CD4-positive, alpha-beta T cell (primary cell): ENCODE measurements at regions of chr5 and their contacts with region 1.

Region 1: GRCh38 chr5:154189819-154190594 is 526 bp upstream of the GALNT10 start:
- DNase-seq: peak; percentile 65 to 92 (median 75)
- ATAC-seq: peak; percentile 75
- H3K4me3 ChIP-seq: peak overlapping the region; percentile 95
- H3K4me3 Mint-ChIP-seq: peak overlapping the region; percentile 94
- H3K27ac ChIP-seq: peak overlapping the region; percentile 42 to 66
- H3K27ac Mint-ChIP-seq: peak overlapping the region; percentile 81
- H3K4me1 ChIP-seq: peaks cover 35% of the 10 kb centered on the region
- H3K4me1 Mint-ChIP-seq: peaks cover 38% of the 10 kb centered on the region
- H3K27me3 ChIP-seq: no peaks in the 10 kb centered on the region
- H3K27me3 Mint-ChIP-seq: no peaks in the 10 kb centered on the region
- CTCF ChIP-seq: peak; percentile 65

Region 2: DNA sequence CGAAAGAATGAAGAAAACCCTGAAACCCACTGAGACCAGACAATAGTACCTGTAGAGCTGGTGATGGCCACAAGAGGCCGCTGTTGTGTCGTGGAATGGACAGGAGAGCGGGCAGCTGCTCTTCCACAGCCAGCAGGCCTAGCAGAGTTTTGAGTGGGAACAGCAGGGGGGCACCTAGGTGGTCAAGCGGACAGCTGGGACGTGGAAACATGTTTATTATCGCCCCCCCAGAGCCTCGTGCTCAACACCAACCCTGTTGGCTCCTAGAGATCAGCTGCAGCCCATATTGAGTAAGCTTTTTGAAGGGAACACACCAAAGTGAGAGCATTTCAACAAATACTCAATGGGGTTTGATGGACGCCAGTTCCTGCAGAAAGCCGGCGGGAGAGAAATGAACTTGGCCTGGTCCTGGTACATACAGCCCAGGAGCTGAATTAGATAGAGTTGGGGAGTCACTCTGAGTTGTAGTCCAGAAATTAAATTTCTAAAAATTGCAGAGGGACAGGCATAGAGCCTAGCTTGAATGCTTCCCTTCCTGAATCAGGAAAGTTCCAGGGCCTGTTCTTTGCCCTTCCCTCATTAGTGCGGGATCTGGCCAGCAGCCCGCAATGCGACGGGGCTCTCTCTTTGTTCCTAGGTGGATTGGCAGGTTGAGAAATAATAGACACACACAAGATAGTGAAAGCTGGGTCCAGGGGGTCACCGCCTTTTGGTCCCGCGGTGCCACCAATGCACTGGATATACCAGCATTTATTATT is 117.4 kb before region 1 on chr5:
- CTCF ChIA-PET with region 1: interaction called, 9 read pairs
- POLR2A ChIA-PET with region 1: interaction called, 15 read pairs
- intact Hi-C with region 1: loop called in 1 of 2 experiments (anchors 5 kb)
- DNase-seq: peak; percentile 68 to 89 (median 81)
- ATAC-seq: peak; percentile 81
- H3K4me3 ChIP-seq: no peak overlapping the region
- H3K4me3 Mint-ChIP-seq: no peak overlapping the region
- H3K27ac ChIP-seq: no peak overlapping the region
- H3K27ac Mint-ChIP-seq: no peak overlapping the region
- H3K4me1 ChIP-seq: peaks cover 22% of the 10 kb centered on the region
- H3K4me1 Mint-ChIP-seq: peaks cover 17% of the 10 kb centered on the region
- H3K27me3 ChIP-seq: no peaks in the 10 kb centered on the region
- H3K27me3 Mint-ChIP-seq: no peaks in the 10 kb centered on the region
- CTCF ChIP-seq: peak; percentile 96

Region 3: DNA sequence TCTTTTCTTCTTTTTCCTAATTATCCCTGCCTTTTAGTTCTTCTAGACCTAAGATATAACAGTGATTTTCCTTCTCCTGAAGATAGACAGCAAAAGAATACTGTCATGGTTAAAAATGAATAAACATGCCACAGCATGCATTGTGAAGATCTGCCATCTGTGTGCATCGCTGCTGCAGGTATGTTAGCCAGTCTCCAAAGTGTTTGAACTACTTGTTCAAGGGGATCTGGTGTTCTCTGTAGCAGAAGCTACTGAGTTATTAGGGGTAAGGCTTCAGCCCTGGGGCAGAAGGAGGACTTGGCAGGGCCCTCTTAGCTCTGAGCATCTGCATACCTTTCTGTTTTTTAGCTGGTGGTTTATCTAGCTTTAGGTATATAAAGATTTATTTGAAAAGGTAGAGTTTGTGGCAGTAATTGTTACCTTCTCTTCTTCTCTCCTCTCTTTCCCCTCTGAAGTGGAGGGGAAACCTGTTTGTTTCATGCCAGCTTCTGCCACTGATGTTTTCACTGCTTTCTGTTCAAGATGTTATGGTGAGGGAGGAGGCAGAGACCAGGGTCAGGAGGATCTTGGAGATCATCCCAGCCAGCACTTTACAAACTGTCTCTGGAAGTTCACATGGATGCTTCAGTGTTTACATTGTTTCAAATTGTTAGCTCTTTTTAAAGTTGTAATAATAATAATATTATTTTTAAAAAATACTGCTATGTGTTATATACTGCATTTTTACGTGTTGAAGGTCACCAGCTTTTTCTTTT is 25.7 kb after region 1 on chr5:
- CTCF ChIA-PET with region 1: no interaction called
- POLR2A ChIA-PET with region 1: interaction called, 15 read pairs
- intact Hi-C with region 1: no loop called
- DNase-seq: no peak
- ATAC-seq: no peak
- H3K4me3 ChIP-seq: no peak overlapping the region
- H3K4me3 Mint-ChIP-seq: no peak overlapping the region
- H3K27ac ChIP-seq: no peak overlapping the region
- H3K27ac Mint-ChIP-seq: no peak overlapping the region
- H3K4me1 ChIP-seq: peaks cover 14% of the 10 kb centered on the region
- H3K4me1 Mint-ChIP-seq: peaks cover 49% of the 10 kb centered on the region
- H3K27me3 ChIP-seq: no peaks in the 10 kb centered on the region
- H3K27me3 Mint-ChIP-seq: no peaks in the 10 kb centered on the region
- CTCF ChIP-seq: no peak

Region 4: GRCh38 chr5:154356020-154356655 is 166.1 kb after region 1 on chr5:
- CTCF ChIA-PET with region 1: no interaction called
- POLR2A ChIA-PET with region 1: no interaction called
- intact Hi-C with region 1: no loop called
- DNase-seq: no peak
- ATAC-seq: no peak
- H3K4me3 ChIP-seq: no peak overlapping the region
- H3K4me3 Mint-ChIP-seq: no peak overlapping the region
- H3K27ac ChIP-seq: no peak overlapping the region
- H3K27ac Mint-ChIP-seq: no peak overlapping the region
- H3K4me1 ChIP-seq: peaks cover 6% of the 10 kb centered on the region
- H3K4me1 Mint-ChIP-seq: no peaks in the 10 kb centered on the region
- H3K27me3 ChIP-seq: no peaks in the 10 kb centered on the region
- H3K27me3 Mint-ChIP-seq: no peaks in the 10 kb centered on the region
- CTCF ChIP-seq: no peak

Region 5: DNA sequence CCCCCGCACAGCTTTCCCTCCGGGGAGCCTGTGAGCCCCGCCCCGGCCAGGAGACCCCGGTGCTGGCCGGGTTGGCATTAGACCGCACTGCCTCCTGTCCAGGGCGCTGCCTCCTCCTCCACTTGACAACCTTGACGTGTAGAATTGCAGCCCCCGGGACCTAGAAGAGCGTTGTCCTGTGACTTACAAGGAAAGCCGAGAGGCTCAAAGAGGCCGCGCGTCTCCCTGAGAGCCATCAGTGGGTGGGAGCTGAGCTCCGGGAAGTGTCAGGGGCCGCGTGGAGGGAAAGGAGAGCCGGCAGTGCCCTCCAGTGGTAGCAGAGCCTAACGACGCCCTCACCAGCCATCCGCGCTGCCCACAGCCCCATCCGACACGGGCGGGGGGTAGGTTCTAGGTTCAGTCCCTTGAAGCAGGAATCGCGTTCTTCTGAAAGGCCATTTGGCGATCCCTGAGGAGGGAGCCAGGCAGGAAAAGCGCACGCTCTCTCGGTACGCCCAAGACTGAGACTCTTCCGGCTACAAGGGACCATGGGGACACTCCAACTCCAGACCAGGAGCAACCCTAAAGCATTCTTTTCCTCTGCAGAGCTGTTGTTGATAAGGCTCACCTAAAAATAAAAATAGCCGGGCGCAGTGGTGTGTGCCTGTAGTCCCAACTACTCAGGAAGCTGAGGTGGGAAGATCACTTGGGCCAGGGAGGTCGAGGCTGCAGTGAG is 215.2 kb after region 1 on chr5:
- CTCF ChIA-PET with region 1: interaction called, 3 read pairs
- POLR2A ChIA-PET with region 1: no interaction called
- intact Hi-C with region 1: loop called in 1 of 2 experiments (anchors 5 kb)
- DNase-seq: peak; percentile 49 to 80 (median 60)
- ATAC-seq: peak; percentile 99
- H3K4me3 ChIP-seq: peak overlapping the region; percentile 27
- H3K4me3 Mint-ChIP-seq: peak overlapping the region; percentile 54
- H3K27ac ChIP-seq: no peak overlapping the region
- H3K27ac Mint-ChIP-seq: no peak overlapping the region
- H3K4me1 ChIP-seq: peaks cover 9% of the 10 kb centered on the region
- H3K4me1 Mint-ChIP-seq: peaks cover 14% of the 10 kb centered on the region
- H3K27me3 ChIP-seq: no peaks in the 10 kb centered on the region
- H3K27me3 Mint-ChIP-seq: no peaks in the 10 kb centered on the region
- CTCF ChIP-seq: peak; percentile 85

Region 6: GRCh38 chr5:154857530-154858296 is 667.7 kb after region 1 on chr5:
- CTCF ChIA-PET with region 1: no interaction called
- POLR2A ChIA-PET with region 1: no interaction called
- intact Hi-C with region 1: loop called in 1 of 2 experiments (anchors 10 kb)
- DNase-seq: peak; percentile 77 to 96 (median 86)
- ATAC-seq: peak; percentile 53
- H3K4me3 ChIP-seq: peak overlapping the region; percentile 73
- H3K4me3 Mint-ChIP-seq: peak overlapping the region; percentile 92
- H3K27ac ChIP-seq: peak overlapping the region; percentile 96 to 98
- H3K27ac Mint-ChIP-seq: peak overlapping the region; percentile 98
- H3K4me1 ChIP-seq: peaks cover 28% of the 10 kb centered on the region
- H3K4me1 Mint-ChIP-seq: peaks cover 46% of the 10 kb centered on the region
- H3K27me3 ChIP-seq: no peaks in the 10 kb centered on the region
- H3K27me3 Mint-ChIP-seq: no peaks in the 10 kb centered on the region
- CTCF ChIP-seq: no peak